GM12878 (cell line): ENCODE measurements at regions of chr19 and their contacts with region 1.

Region 1: DNA sequence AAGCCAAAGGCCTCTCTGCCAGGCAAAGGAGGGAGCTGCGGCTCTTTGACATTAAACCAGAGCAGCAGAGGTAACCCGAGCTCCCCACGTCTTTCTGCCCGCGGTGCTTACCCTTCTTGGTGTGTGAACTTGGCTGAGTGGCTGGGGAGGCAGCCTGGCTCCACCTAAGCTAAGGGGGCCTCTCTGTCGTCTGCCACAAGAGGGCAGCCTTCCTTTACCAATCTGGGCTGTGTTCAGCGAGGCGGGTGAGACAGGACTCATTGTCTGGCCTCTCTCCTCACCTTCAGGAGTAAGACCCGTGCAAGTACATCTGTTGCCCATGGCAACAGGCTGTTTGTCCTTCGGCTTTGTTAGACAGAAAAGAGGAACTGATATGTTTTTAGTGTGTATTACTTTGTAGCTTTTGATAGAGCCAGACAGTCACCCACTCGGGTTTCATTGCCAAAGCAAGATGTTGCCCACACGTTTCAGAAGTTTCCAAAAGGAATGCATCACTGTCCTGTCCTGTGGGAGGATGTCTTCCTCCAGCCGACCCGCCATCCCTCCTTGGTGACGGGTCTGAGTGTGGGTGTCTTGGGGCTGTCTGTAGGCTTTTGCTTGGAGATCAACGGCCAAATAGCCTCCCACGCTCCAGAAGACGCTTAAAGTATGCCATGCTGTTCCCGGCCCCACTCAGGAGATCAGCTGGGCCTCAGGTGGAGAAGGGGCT is 4.6 kb downstream of the POP4 start:
- DNase-seq: peak; percentile 75
- ATAC-seq: peak; percentile 94
- H3K4me3 ChIP-seq: no peak overlapping the region
- H3K27ac ChIP-seq: no peak overlapping the region; the same call in 1 of the 2 replicates
- H3K4me1 ChIP-seq: peaks cover 17% of the 10 kb centered on the region
- H3K27me3 ChIP-seq: no peaks in the 10 kb centered on the region
- CTCF ChIP-seq: peak; percentile 87 to 98 (median 92); a peak in 5 of 6 replicates
- EP300 ChIP-seq: peak in 1 of 2 experiments; percentile 51; a peak in 1 of 4 replicates
- POLR2A ChIP-seq: no peak
- RAD21 ChIP-seq: peak; percentile 89

Region 2: DNA sequence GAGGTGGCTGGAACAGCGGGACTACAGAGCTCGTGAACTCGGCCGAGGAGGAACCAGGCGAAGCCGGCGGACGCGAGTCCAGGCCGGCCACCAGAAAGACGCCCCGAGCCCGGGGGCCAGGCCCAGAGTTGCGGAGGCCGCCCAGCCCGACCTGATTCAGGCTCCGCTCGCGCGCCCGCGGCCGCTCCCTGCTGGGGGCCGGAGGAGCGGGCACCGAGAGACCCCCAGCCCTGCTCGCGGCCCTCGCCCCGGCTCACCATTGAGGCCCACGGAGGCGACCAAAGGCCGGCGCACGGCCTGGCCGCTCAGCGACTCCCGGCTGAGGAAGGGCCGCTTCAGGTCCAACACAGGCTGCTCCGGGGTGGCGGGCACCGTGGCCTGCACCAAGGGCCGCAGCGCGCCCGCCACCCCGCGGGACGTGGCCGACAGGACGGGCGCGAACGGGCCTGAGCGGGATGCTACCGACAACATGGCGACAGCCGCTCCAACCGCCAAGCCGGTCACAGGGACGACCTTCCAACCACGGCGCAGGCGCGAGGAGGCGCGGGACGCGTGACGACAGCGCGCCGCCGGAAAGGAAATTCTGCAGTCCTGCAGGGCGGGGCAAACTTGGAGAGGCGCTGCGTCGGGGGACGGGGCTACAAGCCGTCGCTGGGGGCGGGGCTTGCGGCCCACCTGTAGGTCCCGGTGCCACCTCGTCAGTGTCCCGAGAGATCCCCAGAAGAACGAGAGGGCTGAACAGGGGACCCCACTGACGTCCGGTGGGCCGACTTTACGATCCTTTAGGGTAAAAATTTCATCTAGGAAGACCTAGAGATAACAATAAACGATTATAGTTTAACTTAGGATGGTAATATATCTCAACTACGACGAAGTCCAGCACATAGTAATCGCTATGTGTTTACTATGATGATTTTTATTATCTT is 397.8 kb before region 1 on chr19 and contains the start of gene UQCRFS1:
- CTCF ChIA-PET with region 1: no interaction called
- POLR2A ChIA-PET with region 1: no interaction called
- RAD21 ChIA-PET with region 1: no interaction called
- SMC1A ChIA-PET with region 1: no interaction called
- in situ Hi-C with region 1: loop called (anchors 5 kb)
- intact Hi-C with region 1: no loop called
- DNase-seq: peak; percentile 77
- ATAC-seq: peak; percentile 98
- H3K4me3 ChIP-seq: peak within 1 kb of the TSS; percentile 76
- H3K27ac ChIP-seq: peak within 1 kb of the TSS; percentile 94
- H3K4me1 ChIP-seq: no peaks in the 10 kb centered on the region
- H3K27me3 ChIP-seq: no peaks in the 10 kb centered on the region
- CTCF ChIP-seq: no peak
- EP300 ChIP-seq: no peak
- POLR2A ChIP-seq: peak; percentile 91
- RAD21 ChIP-seq: no peak
- polyA plus RNA-seq, gene UQCRFS1: 9.3 to 41.9 TPM

Region 3: DNA sequence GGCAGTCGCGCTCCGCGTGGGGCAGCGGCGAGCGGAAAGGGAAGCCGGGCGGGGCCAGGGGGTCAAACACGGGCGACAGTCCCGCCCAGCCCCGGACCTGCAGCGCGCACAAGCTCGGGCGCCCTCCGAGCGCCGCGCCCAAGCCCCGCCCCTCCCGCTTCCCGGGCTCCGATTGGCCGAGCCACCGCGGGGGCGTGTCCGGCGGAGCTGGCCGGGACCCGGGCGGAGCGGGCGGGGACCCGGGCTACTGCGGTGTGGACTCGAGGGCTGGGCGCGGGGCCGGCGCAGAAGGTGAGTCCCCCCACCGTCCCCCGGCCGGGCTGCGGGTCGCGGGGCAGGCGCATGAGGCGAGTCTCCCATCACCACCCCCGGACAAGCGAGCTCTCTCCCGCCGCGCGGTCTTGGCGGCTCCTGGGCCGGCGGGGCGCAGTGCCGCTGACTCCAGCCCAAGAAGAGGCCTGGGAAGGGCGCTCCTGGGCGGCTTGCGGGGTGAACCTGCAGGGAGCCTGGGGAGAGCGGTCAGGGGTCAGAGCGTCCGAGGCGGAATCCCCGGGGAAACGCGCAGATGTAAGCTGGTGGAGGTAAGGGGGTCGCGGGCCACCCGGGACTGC is 54.6 kb after region 1 on chr19 and contains the start of gene PLEKHF1:
- CTCF ChIA-PET with region 1: interaction called, 87 read pairs
- POLR2A ChIA-PET with region 1: interaction called, 10 read pairs
- RAD21 ChIA-PET with region 1: interaction called, 37 read pairs
- SMC1A ChIA-PET with region 1: interaction called, 42 read pairs
- in situ Hi-C with region 1: loop called (anchors 10 kb)
- intact Hi-C with region 1: loop called (anchors 1 kb)
- DNase-seq: no peak
- ATAC-seq: peak; percentile 94
- H3K4me3 ChIP-seq: peak within 1 kb of the TSS; percentile 92
- H3K27ac ChIP-seq: peak within 1 kb of the TSS; percentile 84
- H3K4me1 ChIP-seq: peaks cover 33% of the 10 kb centered on the region
- H3K27me3 ChIP-seq: no peaks in the 10 kb centered on the region
- CTCF ChIP-seq: peak in 1 of 3 experiments; percentile 51; a peak in 2 of 6 replicates
- EP300 ChIP-seq: no peak
- POLR2A ChIP-seq: peak; percentile 73
- RAD21 ChIP-seq: peak; percentile 51; the same call in 1 of the 2 replicates
- polyA plus RNA-seq, gene PLEKHF1: 0.10 to 0.31 TPM

Region 4: GRCh38 chr19:29694669-29695627 is 84.2 kb after region 1 on chr19:
- CTCF ChIA-PET with region 1: interaction called, 112 read pairs
- POLR2A ChIA-PET with region 1: no interaction called
- RAD21 ChIA-PET with region 1: interaction called, 8 read pairs
- SMC1A ChIA-PET with region 1: interaction called, 26 read pairs
- in situ Hi-C with region 1: loop called (anchors 5 kb)
- intact Hi-C with region 1: loop called (anchors 1 kb)
- DNase-seq: no peak
- ATAC-seq: peak; percentile 100
- H3K4me3 ChIP-seq: no peak overlapping the region
- H3K27ac ChIP-seq: no peak overlapping the region
- H3K4me1 ChIP-seq: no peaks in the 10 kb centered on the region; the same call in 1 of the 2 replicates
- H3K27me3 ChIP-seq: no peaks in the 10 kb centered on the region
- CTCF ChIP-seq: peak; percentile 85 to 96 (median 95); a peak in 5 of 6 replicates
- EP300 ChIP-seq: no peak
- POLR2A ChIP-seq: no peak
- RAD21 ChIP-seq: peak; percentile 76

Region 5: GRCh38 chr19:29714953-29715700 is 104.4 kb after region 1 on chr19 and contains the start of gene C19orf12:
- CTCF ChIA-PET with region 1: interaction called, 237 read pairs
- POLR2A ChIA-PET with region 1: interaction called, 17 read pairs
- RAD21 ChIA-PET with region 1: interaction called, 61 read pairs
- SMC1A ChIA-PET with region 1: interaction called, 59 read pairs
- in situ Hi-C with region 1: loop called (anchors 10 kb)
- intact Hi-C with region 1: loop called (anchors 1 kb)
- DNase-seq: no peak
- ATAC-seq: peak; percentile 86
- H3K4me3 ChIP-seq: peak within 1 kb of the TSS; percentile 78
- H3K27ac ChIP-seq: peak within 1 kb of the TSS; percentile 79
- H3K4me1 ChIP-seq: peaks cover 11% of the 10 kb centered on the region
- H3K27me3 ChIP-seq: no peaks in the 10 kb centered on the region
- CTCF ChIP-seq: no peak
- EP300 ChIP-seq: no peak
- POLR2A ChIP-seq: peak; percentile 91
- RAD21 ChIP-seq: no peak
- polyA plus RNA-seq, gene C19orf12: 2.3 to 6.6 TPM

Region 6: GRCh38 chr19:29737461-29738000 is 126.8 kb after region 1 on chr19:
- CTCF ChIA-PET with region 1: no interaction called
- POLR2A ChIA-PET with region 1: no interaction called
- RAD21 ChIA-PET with region 1: no interaction called
- SMC1A ChIA-PET with region 1: no interaction called
- in situ Hi-C with region 1: no loop called
- intact Hi-C with region 1: no loop called
- DNase-seq: no peak
- ATAC-seq: no peak
- H3K4me3 ChIP-seq: no peak overlapping the region
- H3K27ac ChIP-seq: no peak overlapping the region
- H3K4me1 ChIP-seq: no peaks in the 10 kb centered on the region
- H3K27me3 ChIP-seq: peaks cover 0 to 3% of the 10 kb centered on the region in 2 experiments; a peak in 2 of 4 replicates
- CTCF ChIP-seq: no peak
- EP300 ChIP-seq: no peak
- POLR2A ChIP-seq: no peak
- RAD21 ChIP-seq: no peak

Region 7: GRCh38 chr19:29844891-29845572 is 234.3 kb after region 1 on chr19:
- CTCF ChIA-PET with region 1: interaction called, 5 read pairs
- POLR2A ChIA-PET with region 1: interaction called, 3 read pairs
- RAD21 ChIA-PET with region 1: no interaction called
- SMC1A ChIA-PET with region 1: no interaction called
- in situ Hi-C with region 1: no loop called
- intact Hi-C with region 1: loop called (anchors 10 kb)
- DNase-seq: peak; percentile 59
- ATAC-seq: peak; percentile 93
- H3K4me3 ChIP-seq: peak overlapping the region; percentile 90
- H3K27ac ChIP-seq: peak overlapping the region; percentile 59
- H3K4me1 ChIP-seq: peaks cover 21% of the 10 kb centered on the region
- H3K27me3 ChIP-seq: no peaks in the 10 kb centered on the region; a peak in 1 of 4 replicates
- CTCF ChIP-seq: peak in 1 of 3 experiments; percentile 5; a peak in 1 of 6 replicates
- EP300 ChIP-seq: no peak
- POLR2A ChIP-seq: peak; percentile 90
- RAD21 ChIP-seq: no peak